CD4-positive, alpha-beta memory T cell (primary cell): ENCODE measurements at regions of chr6 and their contacts with region 1.

Region 1: DNA sequence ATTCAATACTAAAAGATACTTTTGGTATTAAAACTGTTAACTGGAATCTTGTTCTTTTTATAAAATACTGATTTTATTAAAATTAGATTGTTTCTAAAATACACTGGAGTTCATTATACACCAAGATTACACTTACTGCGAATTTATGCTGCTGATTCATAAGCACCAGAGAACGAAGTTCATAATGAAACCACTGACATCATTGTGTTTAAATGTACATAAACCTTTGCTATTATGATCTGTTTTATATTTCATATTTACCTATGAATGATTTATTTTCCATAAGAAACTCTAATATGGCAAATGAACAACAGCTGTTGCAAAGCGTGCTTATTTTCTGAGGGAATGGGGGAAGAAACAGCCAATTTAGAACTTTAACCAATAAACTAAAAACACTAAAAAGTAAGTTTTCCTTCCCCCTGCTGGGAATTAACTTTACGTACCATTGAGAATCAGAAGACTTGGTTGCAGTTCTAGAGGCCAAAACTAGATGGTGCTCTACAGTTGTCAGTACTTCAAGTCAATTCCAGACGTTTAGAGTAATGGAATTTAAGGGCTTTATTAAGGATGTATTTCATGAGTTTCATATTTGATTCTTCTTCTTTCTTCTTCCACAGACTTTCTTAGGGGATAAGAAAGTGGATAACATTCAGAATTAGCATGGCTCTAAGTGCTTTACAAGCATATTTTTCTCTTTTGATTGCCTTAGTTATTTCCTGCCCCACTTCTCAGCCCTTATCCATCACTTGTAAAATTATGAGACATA is 30.8 kb upstream of the COL19A1 start:
- DNase-seq: peak in 4 of 5 donors; percentile 26 to 39 (median 29)
- H3K4me3 ChIP-seq: no peak overlapping the region
- H3K4me3 Mint-ChIP-seq: peak overlapping the region in 1 of 8 donors; percentile 7
- H3K27ac ChIP-seq: no peak overlapping the region
- H3K27ac Mint-ChIP-seq: no peak overlapping the region
- H3K4me1 ChIP-seq: peaks cover 5% of the 10 kb centered on the region
- H3K4me1 Mint-ChIP-seq: peaks cover 0 to 7% (median 3%) of the 10 kb centered on the region in 4 donors
- H3K27me3 ChIP-seq: no peaks in the 10 kb centered on the region
- H3K27me3 Mint-ChIP-seq: peaks cover 9 to 11% of the 10 kb centered on the region in 2 donors

Region 2: DNA sequence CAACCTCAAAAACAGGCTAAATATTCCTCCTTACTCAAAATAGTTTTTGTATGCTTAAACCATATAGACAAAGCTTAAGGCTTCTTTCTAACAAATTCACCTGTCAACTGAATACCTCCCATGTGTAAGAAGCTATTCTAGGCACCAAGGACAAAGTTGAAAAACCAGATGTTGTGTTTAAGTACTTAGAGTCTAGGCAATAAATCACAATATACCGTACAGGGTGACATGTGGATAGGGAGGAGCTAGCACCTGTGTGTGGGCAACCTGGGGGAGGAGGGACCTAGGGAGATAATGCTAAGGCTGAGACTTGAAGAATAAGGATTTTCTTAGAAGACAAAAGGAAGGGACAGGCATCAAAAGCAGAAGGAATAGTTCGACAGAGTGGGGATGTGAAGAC is 162.3 kb before region 1 on chr6:
- CTCF ChIA-PET with region 1: no interaction called
- POLR2A ChIA-PET with region 1: no interaction called
- intact Hi-C with region 1: no loop called
- DNase-seq: no peak
- H3K4me3 ChIP-seq: no peak overlapping the region
- H3K4me3 Mint-ChIP-seq: no peak overlapping the region
- H3K27ac ChIP-seq: no peak overlapping the region
- H3K27ac Mint-ChIP-seq: peak overlapping the region in 2 of 7 donors; percentile 4 to 59
- H3K4me1 ChIP-seq: no peaks in the 10 kb centered on the region
- H3K4me1 Mint-ChIP-seq: peaks cover 0 to 2% (median 0%) of the 10 kb centered on the region in 4 donors
- H3K27me3 ChIP-seq: no peaks in the 10 kb centered on the region
- H3K27me3 Mint-ChIP-seq: no peaks in the 10 kb centered on the region

Region 3: DNA sequence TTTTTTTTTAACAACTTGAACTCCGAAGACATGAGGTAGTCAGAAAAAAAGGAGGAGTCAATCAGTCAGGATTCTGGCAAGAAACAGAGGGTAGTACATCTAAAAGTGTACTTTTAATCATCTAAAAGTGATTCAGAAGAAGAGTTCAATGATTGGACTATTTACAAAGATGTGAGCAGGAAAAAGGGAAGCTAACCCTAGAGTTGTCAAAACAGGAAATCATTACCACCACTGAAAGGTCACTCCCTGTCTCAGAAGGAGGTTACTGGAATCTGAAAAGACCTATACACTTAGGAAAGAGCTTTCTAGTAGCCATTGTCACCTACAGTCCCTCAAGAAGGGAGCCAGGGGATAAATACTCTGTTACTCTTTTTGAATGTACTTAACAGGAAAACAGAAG is 22.1 kb before region 1 on chr6:
- CTCF ChIA-PET with region 1: interaction called, 5 read pairs
- POLR2A ChIA-PET with region 1: interaction called, 3 read pairs
- intact Hi-C with region 1: loop called (anchors 1 kb)
- DNase-seq: no peak
- H3K4me3 ChIP-seq: no peak overlapping the region
- H3K4me3 Mint-ChIP-seq: peak overlapping the region in 7 of 8 donors; percentile 30 to 83 (median 59)
- H3K27ac ChIP-seq: peak overlapping the region; percentile 47
- H3K27ac Mint-ChIP-seq: peak overlapping the region; percentile 84 to 99 (median 90)
- H3K4me1 ChIP-seq: peaks cover 55% of the 10 kb centered on the region
- H3K4me1 Mint-ChIP-seq: peaks cover 40 to 68% (median 55%) of the 10 kb centered on the region in 4 donors
- H3K27me3 ChIP-seq: no peaks in the 10 kb centered on the region
- H3K27me3 Mint-ChIP-seq: no peaks in the 10 kb centered on the region

Region 4: DNA sequence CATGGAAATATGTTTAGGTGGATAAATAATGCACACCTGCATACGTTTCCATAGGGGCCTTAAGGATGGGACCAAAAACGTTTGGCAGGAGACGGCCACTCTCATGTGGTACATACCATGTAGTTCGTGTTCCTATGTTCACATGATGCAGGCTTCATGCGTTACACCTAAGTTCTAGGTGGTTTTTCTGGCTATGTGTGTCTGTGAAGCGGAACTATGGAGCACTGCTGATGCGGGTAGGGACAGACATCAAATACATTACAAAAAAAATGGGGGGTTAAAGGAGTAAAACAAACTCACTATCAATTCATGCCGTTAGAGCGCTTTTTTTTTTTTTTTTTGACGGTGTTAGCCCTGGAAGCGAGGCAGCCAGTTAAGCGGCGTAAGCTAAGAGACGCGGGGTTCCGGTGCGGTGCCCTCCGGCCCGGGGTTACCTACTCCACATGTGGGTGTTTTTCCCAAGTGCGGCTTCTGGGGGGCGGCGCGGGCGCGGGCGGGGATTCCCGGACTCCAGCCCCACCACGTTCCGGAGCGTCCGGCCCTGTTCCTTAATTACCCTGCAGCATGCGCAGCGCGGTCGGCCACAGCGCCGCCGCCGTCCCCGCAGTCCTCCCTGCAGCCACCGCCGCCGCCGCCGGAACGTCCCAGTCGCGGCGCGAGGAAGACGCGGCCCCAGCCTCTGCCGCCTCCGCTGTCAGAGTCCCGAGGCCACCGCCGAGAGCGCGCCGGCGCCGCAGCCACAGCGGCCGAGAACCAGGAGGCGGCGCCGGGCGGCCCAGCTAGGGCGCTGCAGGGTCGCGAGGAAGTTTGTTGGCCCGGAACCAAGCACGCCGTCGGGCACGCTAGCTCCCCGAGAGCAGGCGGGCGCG is 31.4 kb after region 1 on chr6:
- CTCF ChIA-PET with region 1: interaction called, 3 read pairs
- POLR2A ChIA-PET with region 1: no interaction called
- intact Hi-C with region 1: loop called (anchors 2 kb)
- DNase-seq: peak; percentile 54 to 62 (median 58)
- H3K4me3 ChIP-seq: peak overlapping the region; percentile 29 to 37
- H3K4me3 Mint-ChIP-seq: peak overlapping the region; percentile 83 to 97 (median 92)
- H3K27ac ChIP-seq: peak overlapping the region; percentile 24
- H3K27ac Mint-ChIP-seq: peak overlapping the region; percentile 43 to 90 (median 71)
- H3K4me1 ChIP-seq: peaks cover 14% of the 10 kb centered on the region
- H3K4me1 Mint-ChIP-seq: peaks cover 11 to 23% (median 18%) of the 10 kb centered on the region in 4 donors
- H3K27me3 ChIP-seq: peaks cover 9% of the 10 kb centered on the region
- H3K27me3 Mint-ChIP-seq: peaks cover 8 to 13% of the 10 kb centered on the region in 2 donors

Region 5: GRCh38 chr6:70107852-70108629 is 272.4 kb after region 1 on chr6:
- CTCF ChIA-PET with region 1: interaction called, 3 read pairs
- POLR2A ChIA-PET with region 1: no interaction called
- intact Hi-C with region 1: loop called (anchors 1 kb)
- DNase-seq: peak in 4 of 5 donors; percentile 23 to 34 (median 28)
- H3K4me3 ChIP-seq: no peak overlapping the region
- H3K4me3 Mint-ChIP-seq: no peak overlapping the region
- H3K27ac ChIP-seq: no peak overlapping the region
- H3K27ac Mint-ChIP-seq: no peak overlapping the region
- H3K4me1 ChIP-seq: no peaks in the 10 kb centered on the region
- H3K4me1 Mint-ChIP-seq: no peaks in the 10 kb centered on the region
- H3K27me3 ChIP-seq: no peaks in the 10 kb centered on the region
- H3K27me3 Mint-ChIP-seq: peaks cover 5 to 6% of the 10 kb centered on the region in 2 donors